ENCODE measurements at regions of chr2 and their contacts with region 1.

Region 1: GRCh38 chr2:176554101-176555048 is 285.1 kb downstream of the MTX2 start:
- DNase-seq: peak in 6 of 9 experiments; percentile 16 to 72 (median 40)
- ATAC-seq: peak; percentile 59
- H3K4me3 ChIP-seq: peak overlapping the region; percentile 47 to 51
- H3K4me3 Mint-ChIP-seq: peak overlapping the region; percentile 84
- H3K27ac ChIP-seq: no peak overlapping the region
- H3K27ac Mint-ChIP-seq: no peak overlapping the region
- H3K4me1 ChIP-seq: no peaks in the 10 kb centered on the region
- H3K4me1 Mint-ChIP-seq: peaks cover 11% of the 10 kb centered on the region
- H3K27me3 ChIP-seq: peaks cover 3% of the 10 kb centered on the region in 2 experiments
- H3K27me3 Mint-ChIP-seq: peaks cover 42% of the 10 kb centered on the region
- CTCF ChIP-seq: peak; percentile 77

Region 2: GRCh38 chr2:176531608-176532007 is 22.8 kb before region 1 on chr2:
- CTCF ChIA-PET with region 1: interaction called, 11 read pairs
- POLR2A ChIA-PET with region 1: no interaction called
- intact Hi-C with region 1: no loop called
- DNase-seq: no peak
- ATAC-seq: no peak
- H3K4me3 ChIP-seq: no peak overlapping the region
- H3K4me3 Mint-ChIP-seq: no peak overlapping the region
- H3K27ac ChIP-seq: no peak overlapping the region
- H3K27ac Mint-ChIP-seq: no peak overlapping the region
- H3K4me1 ChIP-seq: no peaks in the 10 kb centered on the region
- H3K4me1 Mint-ChIP-seq: no peaks in the 10 kb centered on the region
- H3K27me3 ChIP-seq: no peaks in the 10 kb centered on the region
- H3K27me3 Mint-ChIP-seq: peaks cover 25% of the 10 kb centered on the region
- CTCF ChIP-seq: no peak

Region 3: DNA sequence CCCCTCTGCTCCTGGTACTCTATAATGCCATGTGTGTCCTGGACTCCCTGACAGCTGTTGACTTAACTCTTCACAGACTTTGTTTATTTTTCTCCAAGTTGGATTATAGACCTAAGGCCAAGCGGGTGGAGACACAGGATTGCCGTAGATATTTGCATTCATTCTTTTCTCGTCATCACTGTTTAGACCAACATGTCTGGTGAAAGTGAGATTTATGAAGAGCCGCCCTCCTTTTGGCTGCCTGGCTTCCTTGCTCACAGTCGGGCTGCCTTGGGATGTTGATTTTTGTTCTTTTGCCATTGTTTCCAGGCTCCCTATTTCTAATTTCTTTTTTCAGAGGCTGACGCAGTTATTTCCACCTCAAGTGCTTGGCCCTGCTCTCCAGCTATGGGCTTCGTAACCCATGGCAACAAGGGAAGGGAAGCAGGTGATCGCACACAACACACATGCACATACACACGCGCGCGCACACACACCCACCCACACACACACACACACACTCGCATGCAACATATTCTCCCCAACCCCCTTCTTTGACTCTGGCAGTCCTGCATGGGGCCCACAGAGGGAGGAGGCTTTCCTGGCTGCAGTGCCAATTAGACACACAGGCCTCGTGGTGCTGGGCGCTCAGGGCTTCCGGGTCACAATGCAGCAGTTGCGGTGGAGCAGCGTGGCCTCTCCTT is 11.4 kb after region 1 on chr2:
- CTCF ChIA-PET with region 1: interaction called, 20 read pairs
- POLR2A ChIA-PET with region 1: interaction called, 3 read pairs
- intact Hi-C with region 1: no loop called
- DNase-seq: no peak
- ATAC-seq: no peak
- H3K4me3 ChIP-seq: no peak overlapping the region
- H3K4me3 Mint-ChIP-seq: no peak overlapping the region
- H3K27ac ChIP-seq: no peak overlapping the region
- H3K27ac Mint-ChIP-seq: no peak overlapping the region
- H3K4me1 ChIP-seq: no peaks in the 10 kb centered on the region
- H3K4me1 Mint-ChIP-seq: no peaks in the 10 kb centered on the region
- H3K27me3 ChIP-seq: peaks cover 2 to 8% of the 10 kb centered on the region in 2 experiments
- H3K27me3 Mint-ChIP-seq: peaks cover 30% of the 10 kb centered on the region
- CTCF ChIP-seq: no peak

Region 4: GRCh38 chr2:176931588-176932563 is 377.5 kb after region 1 on chr2:
- CTCF ChIA-PET with region 1: no interaction called
- POLR2A ChIA-PET with region 1: no interaction called
- intact Hi-C with region 1: no loop called
- DNase-seq: peak in 3 of 9 experiments; percentile 21 to 88 (median 75)
- ATAC-seq: peak; percentile 90
- H3K4me3 ChIP-seq: peak overlapping the region in 1 of 2 experiments; percentile 33
- H3K4me3 Mint-ChIP-seq: peak overlapping the region; percentile 59
- H3K27ac ChIP-seq: peak overlapping the region in 1 of 2 experiments; percentile 80
- H3K27ac Mint-ChIP-seq: peak overlapping the region; percentile 69
- H3K4me1 ChIP-seq: no peaks in the 10 kb centered on the region
- H3K4me1 Mint-ChIP-seq: peaks cover 14% of the 10 kb centered on the region
- H3K27me3 ChIP-seq: no peaks in the 10 kb centered on the region
- H3K27me3 Mint-ChIP-seq: no peaks in the 10 kb centered on the region
- CTCF ChIP-seq: no peak

Measured in CD8-positive, alpha-beta T cell (primary cell).